Activated CD4-positive, alpha-beta memory T cell treated with anti-CD3 and anti-CD28 coated beads for 36 hours (primary cell): ENCODE measurements at regions of chr2 and their contacts with region 1.

Region 1: DNA sequence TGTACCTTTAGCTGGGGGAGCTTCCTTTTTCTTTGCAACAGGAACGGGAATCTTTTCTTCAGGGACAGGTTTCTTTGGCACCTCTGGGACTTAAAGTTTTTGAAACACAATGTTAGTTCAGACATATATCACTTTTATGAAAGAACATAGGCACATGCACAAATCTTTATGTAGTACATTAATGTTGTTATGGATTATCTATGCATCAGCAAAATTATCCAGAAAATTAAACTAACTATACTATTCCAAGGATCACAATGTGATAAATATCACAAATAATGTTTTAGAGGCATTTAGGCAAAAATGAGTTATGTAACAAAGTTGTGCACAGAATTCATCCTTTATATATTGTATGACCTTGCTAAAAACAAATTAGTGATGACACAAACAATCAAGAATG is 117.4 kb downstream of the TTN start:
- DNase-seq: no peak
- H3K4me3 Mint-ChIP-seq: no peak overlapping the region
- H3K27ac Mint-ChIP-seq: no peak overlapping the region
- H3K4me1 Mint-ChIP-seq: no peaks in the 10 kb centered on the region
- H3K27me3 Mint-ChIP-seq: peaks cover 1% of the 10 kb centered on the region

Region 2: DNA sequence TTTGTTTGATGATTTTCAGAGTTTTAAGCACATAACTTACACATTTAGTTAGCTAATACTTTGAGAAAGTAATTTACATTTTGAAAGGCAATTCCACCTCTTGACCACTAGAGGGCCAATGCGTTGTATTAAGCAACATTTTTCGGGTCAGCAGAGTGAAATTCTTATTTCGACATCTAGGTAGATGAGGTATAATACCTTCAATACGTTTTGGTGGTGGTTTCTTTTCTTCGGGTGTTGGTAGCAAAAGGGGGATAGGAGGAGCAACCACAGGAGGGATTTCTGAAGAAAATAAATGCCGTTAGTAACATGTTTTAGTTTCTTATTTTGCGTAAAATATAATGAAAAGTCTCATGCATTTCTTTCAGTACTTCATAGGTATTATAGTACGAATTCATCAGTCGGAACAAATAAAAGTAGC is 11.1 kb after region 1 on chr2:
- CTCF ChIA-PET with region 1: interaction called, 16 read pairs
- POLR2A ChIA-PET with region 1: no interaction called
- intact Hi-C with region 1: no loop called
- DNase-seq: no peak
- H3K4me3 Mint-ChIP-seq: no peak overlapping the region
- H3K27ac Mint-ChIP-seq: no peak overlapping the region
- H3K4me1 Mint-ChIP-seq: no peaks in the 10 kb centered on the region
- H3K27me3 Mint-ChIP-seq: peaks cover 3% of the 10 kb centered on the region

Region 3: GRCh38 chr2:178747767-178748166 is 58.0 kb after region 1 on chr2:
- CTCF ChIA-PET with region 1: no interaction called
- POLR2A ChIA-PET with region 1: no interaction called
- intact Hi-C with region 1: no loop called
- DNase-seq: no peak
- H3K4me3 Mint-ChIP-seq: no peak overlapping the region
- H3K27ac Mint-ChIP-seq: no peak overlapping the region
- H3K4me1 Mint-ChIP-seq: no peaks in the 10 kb centered on the region
- H3K27me3 Mint-ChIP-seq: no peaks in the 10 kb centered on the region